CD8-positive, alpha-beta T cell (primary cell): ENCODE measurements at regions of chr12 and their contacts with region 1.

Region 1: GRCh38 chr12:71892059-71892458 is 46.6 kb upstream of the TPH2 start:
- DNase-seq: no peak
- ATAC-seq: no peak
- H3K4me3 ChIP-seq: no peak overlapping the region
- H3K4me3 Mint-ChIP-seq: no peak overlapping the region
- H3K27ac ChIP-seq: no peak overlapping the region
- H3K27ac Mint-ChIP-seq: peak overlapping the region; percentile 56
- H3K4me1 ChIP-seq: no peaks in the 10 kb centered on the region
- H3K4me1 Mint-ChIP-seq: peaks cover 15% of the 10 kb centered on the region
- H3K27me3 ChIP-seq: no peaks in the 10 kb centered on the region
- H3K27me3 Mint-ChIP-seq: no peaks in the 10 kb centered on the region
- CTCF ChIP-seq: no peak

Region 2: DNA sequence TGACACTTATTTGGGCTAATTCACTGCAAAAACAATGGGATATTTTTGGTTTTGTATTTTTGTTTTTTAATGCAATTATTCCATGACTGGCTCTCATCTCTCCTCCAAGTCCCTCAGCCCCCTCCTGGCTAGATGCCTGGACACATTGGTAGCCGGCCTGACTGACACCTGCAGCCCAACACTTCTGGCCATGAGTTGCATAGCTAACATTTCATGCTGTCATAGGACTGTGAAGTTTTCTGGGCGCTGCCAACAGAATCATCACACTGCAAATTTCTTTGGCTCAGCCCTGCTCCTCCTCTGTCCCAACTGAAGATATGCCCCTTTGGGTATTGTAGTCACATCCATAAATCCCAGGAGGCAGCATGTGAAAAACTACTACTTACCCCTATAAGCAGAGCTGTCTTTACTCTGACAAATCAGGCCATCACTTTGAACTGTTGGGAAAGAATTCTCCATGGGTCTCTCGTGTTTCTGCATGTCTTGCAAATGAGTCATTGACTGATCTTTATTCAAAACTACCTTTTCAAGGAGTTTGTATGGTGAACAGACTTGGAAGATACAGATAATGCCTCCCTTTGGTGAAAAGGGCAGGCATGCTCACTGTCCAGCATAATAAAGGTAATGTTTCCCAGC is 579.2 kb before region 1 on chr12:
- CTCF ChIA-PET with region 1: no interaction called
- POLR2A ChIA-PET with region 1: no interaction called
- intact Hi-C with region 1: no loop called
- DNase-seq: no peak
- ATAC-seq: no peak
- H3K4me3 ChIP-seq: no peak overlapping the region
- H3K4me3 Mint-ChIP-seq: no peak overlapping the region
- H3K27ac ChIP-seq: no peak overlapping the region
- H3K27ac Mint-ChIP-seq: no peak overlapping the region
- H3K4me1 ChIP-seq: no peaks in the 10 kb centered on the region
- H3K4me1 Mint-ChIP-seq: no peaks in the 10 kb centered on the region
- H3K27me3 ChIP-seq: no peaks in the 10 kb centered on the region
- H3K27me3 Mint-ChIP-seq: no peaks in the 10 kb centered on the region
- CTCF ChIP-seq: no peak

Region 3: GRCh38 chr12:71878208-71878607 is 13.9 kb before region 1 on chr12:
- CTCF ChIA-PET with region 1: no interaction called
- POLR2A ChIA-PET with region 1: interaction called, 4 read pairs
- intact Hi-C with region 1: loop called in 1 of 2 experiments (anchors 2 kb)
- DNase-seq: no peak
- ATAC-seq: no peak
- H3K4me3 ChIP-seq: no peak overlapping the region
- H3K4me3 Mint-ChIP-seq: no peak overlapping the region
- H3K27ac ChIP-seq: no peak overlapping the region
- H3K27ac Mint-ChIP-seq: no peak overlapping the region
- H3K4me1 ChIP-seq: no peaks in the 10 kb centered on the region
- H3K4me1 Mint-ChIP-seq: peaks cover 29% of the 10 kb centered on the region
- H3K27me3 ChIP-seq: no peaks in the 10 kb centered on the region
- H3K27me3 Mint-ChIP-seq: no peaks in the 10 kb centered on the region
- CTCF ChIP-seq: no peak